GM12878 (cell line): ENCODE measurements at regions of chr1 and their contacts with region 1.

Region 1: DNA sequence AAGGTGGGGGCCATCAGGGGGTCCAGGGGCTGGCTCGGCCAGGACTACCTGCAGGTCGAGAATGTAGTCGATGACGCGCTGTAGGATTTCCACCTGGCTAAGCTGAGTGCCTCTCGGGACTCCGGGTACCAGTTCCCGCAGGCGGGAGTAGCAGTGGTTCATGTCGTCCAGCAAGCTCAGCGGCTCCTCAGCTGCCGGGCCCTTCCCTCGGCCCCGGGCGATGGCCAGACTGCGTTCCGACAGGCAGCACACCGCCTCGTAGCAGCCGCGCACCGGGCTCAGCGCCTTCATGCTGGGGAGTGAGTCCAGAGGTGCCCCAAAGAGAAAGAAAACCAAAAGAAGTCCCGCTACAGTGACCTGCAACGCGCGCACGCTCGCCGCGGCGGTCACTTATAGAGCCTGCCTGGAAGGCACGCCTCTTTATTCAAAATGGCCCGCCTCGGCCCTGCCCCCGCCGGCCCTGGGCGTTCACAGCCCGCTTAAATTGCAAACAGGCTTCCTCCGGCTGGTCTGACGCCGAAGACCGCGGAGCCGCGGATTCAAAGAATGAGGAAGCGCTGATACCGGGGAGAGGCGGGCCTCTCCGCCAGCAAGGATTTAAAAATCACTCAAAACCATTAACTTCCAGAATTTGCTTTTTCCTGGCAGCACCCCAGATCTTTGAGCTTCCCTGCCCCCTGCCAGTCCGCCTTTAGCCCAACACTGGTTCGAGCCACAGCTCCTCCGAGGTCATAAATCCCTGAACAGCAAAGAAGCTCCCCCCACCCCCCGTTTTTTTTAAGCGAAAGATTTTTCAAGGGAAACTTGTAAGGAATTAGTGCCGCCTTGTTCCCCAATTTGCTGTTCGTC is at the start of gene ID3:
- DNase-seq: peak; percentile 69
- ATAC-seq: peak; percentile 76
- H3K4me3 ChIP-seq: peak within 1 kb of the TSS; percentile 96
- H3K27ac ChIP-seq: peak within 1 kb of the TSS; percentile 90
- H3K4me1 ChIP-seq: peaks cover 46% of the 10 kb centered on the region
- H3K27me3 ChIP-seq: no peaks in the 10 kb centered on the region
- CTCF ChIP-seq: no peak
- EP300 ChIP-seq: no peak
- POLR2A ChIP-seq: peak; percentile 98
- RAD21 ChIP-seq: 0 out of 2 replicates have a peak, but pooled peaks have one; percentile 1
- polyA plus RNA-seq, gene ID3: 42.7 to 104 TPM

Region 2: GRCh38 chr1:23530747-23531561 is 28.4 kb before region 1 on chr1 and contains the start of gene E2F2:
- CTCF ChIA-PET with region 1: interaction called, 4 read pairs
- POLR2A ChIA-PET with region 1: interaction called, 30 read pairs
- RAD21 ChIA-PET with region 1: interaction called, 6 read pairs
- SMC1A ChIA-PET with region 1: interaction called, 7 read pairs
- in situ Hi-C with region 1: no loop called
- intact Hi-C with region 1: no loop called
- DNase-seq: no peak
- ATAC-seq: peak; percentile 72
- H3K4me3 ChIP-seq: peak within 1 kb of the TSS; percentile 85
- H3K27ac ChIP-seq: peak within 1 kb of the TSS; percentile 89
- H3K4me1 ChIP-seq: peaks cover 64% of the 10 kb centered on the region
- H3K27me3 ChIP-seq: no peaks in the 10 kb centered on the region
- CTCF ChIP-seq: peak in 2 of 3 experiments; percentile 23 to 29; a peak in 3 of 6 replicates
- EP300 ChIP-seq: no peak
- POLR2A ChIP-seq: peak; percentile 66
- RAD21 ChIP-seq: no peak
- polyA plus RNA-seq, gene E2F2: 4.3 to 4.6 TPM

Region 3: GRCh38 chr1:23548704-23549143 is 10.6 kb before region 1 on chr1:
- CTCF ChIA-PET with region 1: interaction called, 24 read pairs
- POLR2A ChIA-PET with region 1: interaction called, 5 read pairs
- RAD21 ChIA-PET with region 1: interaction called, 15 read pairs
- SMC1A ChIA-PET with region 1: interaction called, 19 read pairs
- in situ Hi-C with region 1: no loop called
- intact Hi-C with region 1: no loop called
- DNase-seq: no peak
- ATAC-seq: peak; percentile 52
- H3K4me3 ChIP-seq: no peak overlapping the region
- H3K27ac ChIP-seq: no peak overlapping the region
- H3K4me1 ChIP-seq: peaks cover 21% of the 10 kb centered on the region
- H3K27me3 ChIP-seq: no peaks in the 10 kb centered on the region
- CTCF ChIP-seq: no peak
- EP300 ChIP-seq: no peak
- POLR2A ChIP-seq: no peak
- RAD21 ChIP-seq: no peak

Region 4: DNA sequence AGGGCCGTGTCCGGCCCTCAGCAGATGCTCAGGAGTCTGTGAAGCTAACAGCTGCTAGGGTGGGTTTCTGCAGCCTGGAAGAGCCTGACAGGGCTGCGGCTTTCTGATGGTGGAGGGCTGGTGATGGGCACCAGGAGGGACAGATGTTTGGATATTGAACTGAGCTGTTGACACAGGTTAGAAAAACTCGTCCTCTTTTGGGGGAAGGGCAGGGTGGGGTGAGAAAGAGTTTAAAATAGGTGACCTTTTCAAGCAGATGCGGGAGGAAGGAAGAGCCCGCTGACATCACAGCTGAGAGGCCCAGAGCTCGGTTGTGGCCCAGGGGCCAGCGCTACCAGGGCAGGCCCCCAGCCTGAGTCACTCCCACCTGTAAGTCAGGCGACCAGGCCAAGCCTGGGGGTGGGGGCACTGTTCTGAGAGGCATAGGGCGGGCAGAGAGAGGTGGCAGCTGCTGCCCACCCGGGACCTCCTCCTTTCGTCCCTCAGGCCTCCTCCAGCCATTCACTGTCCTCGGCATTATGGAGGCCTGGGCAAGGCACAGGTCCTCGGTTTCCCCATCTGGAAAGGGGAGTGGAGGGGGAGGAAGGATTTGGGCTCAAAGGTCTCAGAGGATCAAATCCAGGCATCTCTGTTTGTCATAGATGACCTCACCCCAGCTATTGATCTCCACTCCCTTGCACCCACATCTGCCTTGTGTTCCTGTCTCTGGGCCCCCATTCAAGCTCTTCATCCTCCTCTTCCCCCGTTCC is 32.3 kb after region 1 on chr1:
- CTCF ChIA-PET with region 1: interaction called, 108 read pairs
- POLR2A ChIA-PET with region 1: interaction called, 206 read pairs
- RAD21 ChIA-PET with region 1: interaction called, 153 read pairs
- SMC1A ChIA-PET with region 1: interaction called, 419 read pairs
- in situ Hi-C with region 1: no loop called
- intact Hi-C with region 1: loop called (anchors 5 kb)
- DNase-seq: no peak
- ATAC-seq: peak; percentile 71
- H3K4me3 ChIP-seq: peak overlapping the region; percentile 9; the same call in 1 of the 2 replicates
- H3K27ac ChIP-seq: peak overlapping the region; percentile 93
- H3K4me1 ChIP-seq: peaks cover 72% of the 10 kb centered on the region
- H3K27me3 ChIP-seq: no peaks in the 10 kb centered on the region
- CTCF ChIP-seq: no peak
- EP300 ChIP-seq: peak; percentile 80 to 81; a peak in 3 of 4 replicates
- POLR2A ChIP-seq: peak; percentile 48; the same call in 1 of the 2 replicates
- RAD21 ChIP-seq: no peak

Region 5: GRCh38 chr1:23613191-23614031 is 54.1 kb after region 1 on chr1:
- CTCF ChIA-PET with region 1: interaction called, 5 read pairs
- POLR2A ChIA-PET with region 1: interaction called, 18 read pairs
- RAD21 ChIA-PET with region 1: interaction called, 13 read pairs
- SMC1A ChIA-PET with region 1: interaction called, 6 read pairs
- in situ Hi-C with region 1: no loop called
- intact Hi-C with region 1: no loop called
- DNase-seq: no peak
- ATAC-seq: peak; percentile 63
- H3K4me3 ChIP-seq: no peak overlapping the region; the same call in 1 of the 2 replicates
- H3K27ac ChIP-seq: peak overlapping the region; percentile 80
- H3K4me1 ChIP-seq: peaks cover 37% of the 10 kb centered on the region
- H3K27me3 ChIP-seq: no peaks in the 10 kb centered on the region
- CTCF ChIP-seq: 0 out of 6 replicates have a peak, but pooled peaks of 1 of the 3 experiments have one; percentile 9
- EP300 ChIP-seq: no peak
- POLR2A ChIP-seq: no peak
- RAD21 ChIP-seq: no peak

Region 6: DNA sequence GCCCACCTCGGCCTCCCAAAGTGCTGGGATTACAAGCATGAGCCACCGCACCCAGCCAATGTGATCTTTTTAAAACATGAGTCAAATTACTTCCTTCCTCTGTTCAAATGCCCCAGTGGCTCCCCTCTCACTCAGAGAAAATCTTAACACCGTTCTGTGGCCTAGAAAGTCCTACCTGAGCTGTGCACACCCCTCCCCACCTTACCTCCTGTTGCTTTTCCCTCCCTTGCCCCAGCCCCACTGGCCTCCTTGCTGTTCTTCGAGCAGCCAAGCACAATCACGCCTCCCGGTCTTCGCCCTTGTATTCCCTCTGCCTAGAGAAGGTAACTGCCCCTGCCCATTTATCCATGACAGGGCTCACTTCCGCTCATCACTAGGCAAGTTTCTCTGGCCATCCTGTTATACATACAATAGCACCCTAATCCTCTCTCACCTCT is 69.6 kb after region 1 on chr1:
- CTCF ChIA-PET with region 1: interaction called, 959 read pairs
- POLR2A ChIA-PET with region 1: interaction called, 50 read pairs
- RAD21 ChIA-PET with region 1: interaction called, 561 read pairs
- SMC1A ChIA-PET with region 1: interaction called, 584 read pairs
- in situ Hi-C with region 1: no loop called
- intact Hi-C with region 1: loop called (anchors 2 kb)
- DNase-seq: no peak
- ATAC-seq: peak; percentile 62
- H3K4me3 ChIP-seq: no peak overlapping the region
- H3K27ac ChIP-seq: no peak overlapping the region; the same call in 1 of the 2 replicates
- H3K4me1 ChIP-seq: peaks cover 44% of the 10 kb centered on the region
- H3K27me3 ChIP-seq: no peaks in the 10 kb centered on the region
- CTCF ChIP-seq: no peak
- EP300 ChIP-seq: no peak
- POLR2A ChIP-seq: no peak
- RAD21 ChIP-seq: no peak